ENCODE measurements at regions of chr7 and their contacts with region 1.

Region 1: GRCh38 chr7:29105752-29106668 is 40.3 kb downstream of the CPVL start:
- DNase-seq: peak; percentile 32
- H3K4me3 ChIP-seq: no peak overlapping the region
- H3K27ac ChIP-seq: no peak overlapping the region
- H3K4me1 ChIP-seq: no peaks in the 10 kb centered on the region
- CTCF ChIP-seq: peak; percentile 77

Region 2: DNA sequence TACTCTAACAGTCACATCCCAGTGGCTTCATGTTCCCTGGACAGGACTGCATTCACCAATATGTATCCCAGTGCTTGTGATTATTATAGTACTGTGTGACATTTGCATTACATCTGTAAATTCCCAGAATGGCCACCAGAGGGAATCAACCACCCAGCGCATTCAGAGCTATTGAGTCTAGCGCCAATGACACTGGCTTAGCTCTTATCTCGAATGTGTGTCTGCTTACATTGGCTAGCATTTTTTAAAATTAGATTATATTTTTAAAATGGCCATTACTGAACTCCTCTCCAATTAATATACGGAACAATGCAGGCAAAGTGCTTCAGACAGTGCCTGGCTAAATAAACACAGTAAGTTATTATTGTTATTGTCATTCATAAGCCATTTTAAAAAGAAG is 184.2 kb before region 1 on chr7:
- CTCF ChIA-PET with region 1: interaction called, 8 read pairs
- POLR2A ChIA-PET with region 1: no interaction called
- intact Hi-C with region 1: loop called (anchors 1 kb)
- DNase-seq: peak; percentile 55
- H3K4me3 ChIP-seq: no peak overlapping the region
- H3K27ac ChIP-seq: no peak overlapping the region
- H3K4me1 ChIP-seq: no peaks in the 10 kb centered on the region
- CTCF ChIP-seq: peak; percentile 84

Region 3: GRCh38 chr7:29053105-29053872 is 52.7 kb before region 1 on chr7:
- CTCF ChIA-PET with region 1: no interaction called
- POLR2A ChIA-PET with region 1: no interaction called
- intact Hi-C with region 1: no loop called
- DNase-seq: no peak
- H3K4me3 ChIP-seq: no peak overlapping the region
- H3K27ac ChIP-seq: no peak overlapping the region
- H3K4me1 ChIP-seq: no peaks in the 10 kb centered on the region
- CTCF ChIP-seq: no peak